Left ventricle myocardium inferior (tissue), 1 donor: ENCODE measurements at regions of chr9 and their contacts with region 1.

Region 1: DNA sequence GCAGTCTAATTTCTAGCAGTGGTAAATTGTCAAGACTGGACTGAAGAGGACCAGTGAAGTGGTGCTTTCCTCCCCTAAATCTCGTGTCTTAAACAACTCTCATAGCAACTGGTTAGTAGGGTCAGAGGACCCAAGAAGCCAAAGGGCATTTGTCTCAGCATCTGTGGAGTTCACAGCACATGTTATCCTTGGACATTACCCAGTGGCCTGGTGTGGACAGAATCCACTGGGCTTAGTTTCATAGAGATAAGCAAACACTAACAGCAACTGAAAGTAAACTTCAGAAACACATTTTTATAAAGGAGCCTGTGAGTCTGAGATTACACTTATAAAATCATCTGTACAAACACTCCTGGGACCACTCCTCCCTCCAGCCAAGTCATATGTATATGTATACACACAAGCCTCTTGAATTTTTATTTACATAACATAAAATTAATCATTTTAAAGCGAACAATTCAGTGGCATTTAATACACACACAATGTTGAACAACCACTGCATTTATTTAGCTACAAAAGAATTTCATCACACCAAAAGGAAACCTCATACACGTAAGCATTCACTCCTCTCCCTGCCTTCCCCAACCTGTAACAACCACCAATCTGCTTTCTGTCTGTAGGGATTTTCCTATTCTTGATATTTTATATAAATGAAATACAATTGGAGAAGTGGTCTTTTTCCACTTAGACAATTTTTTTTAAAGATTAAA is 457.8 kb downstream of the RASEF start:
- DNase-seq: no peak
- H3K4me3 ChIP-seq: no peak overlapping the region
- H3K27ac ChIP-seq: no peak overlapping the region
- H3K4me1 ChIP-seq: peaks cover 30% of the 10 kb centered on the region
- H3K27me3 ChIP-seq: peaks cover 24% of the 10 kb centered on the region
- CTCF ChIP-seq: no peak

Region 2: GRCh38 chr9:82445556-82445955 is 159.5 kb before region 1 on chr9:
- intact Hi-C with region 1: no loop called
- DNase-seq: no peak
- H3K4me3 ChIP-seq: no peak overlapping the region
- H3K27ac ChIP-seq: no peak overlapping the region
- H3K4me1 ChIP-seq: no peaks in the 10 kb centered on the region
- H3K27me3 ChIP-seq: no peaks in the 10 kb centered on the region
- CTCF ChIP-seq: no peak

Region 3: DNA sequence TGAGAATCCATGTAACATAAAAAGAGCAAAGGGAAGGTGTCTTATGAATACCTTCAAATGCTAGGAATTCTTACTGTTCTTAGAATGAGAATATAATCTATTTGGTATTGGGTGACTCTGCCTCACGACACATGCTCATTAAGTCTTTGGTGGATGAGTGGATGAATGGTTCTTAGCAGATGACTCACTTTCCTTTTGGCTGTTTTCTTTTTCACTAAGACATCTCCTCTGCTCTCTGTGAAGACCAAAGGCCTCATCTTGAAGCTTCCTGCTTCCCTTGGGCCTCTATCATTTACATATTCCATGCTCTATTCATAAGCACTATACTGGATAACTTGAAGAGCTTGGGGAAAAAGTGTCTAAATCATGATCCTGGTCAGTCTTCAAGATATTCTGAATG is 148.5 kb before region 1 on chr9:
- intact Hi-C with region 1: no loop called
- DNase-seq: no peak
- H3K4me3 ChIP-seq: no peak overlapping the region
- H3K27ac ChIP-seq: no peak overlapping the region
- H3K4me1 ChIP-seq: no peaks in the 10 kb centered on the region
- H3K27me3 ChIP-seq: no peaks in the 10 kb centered on the region
- CTCF ChIP-seq: no peak

Region 4: DNA sequence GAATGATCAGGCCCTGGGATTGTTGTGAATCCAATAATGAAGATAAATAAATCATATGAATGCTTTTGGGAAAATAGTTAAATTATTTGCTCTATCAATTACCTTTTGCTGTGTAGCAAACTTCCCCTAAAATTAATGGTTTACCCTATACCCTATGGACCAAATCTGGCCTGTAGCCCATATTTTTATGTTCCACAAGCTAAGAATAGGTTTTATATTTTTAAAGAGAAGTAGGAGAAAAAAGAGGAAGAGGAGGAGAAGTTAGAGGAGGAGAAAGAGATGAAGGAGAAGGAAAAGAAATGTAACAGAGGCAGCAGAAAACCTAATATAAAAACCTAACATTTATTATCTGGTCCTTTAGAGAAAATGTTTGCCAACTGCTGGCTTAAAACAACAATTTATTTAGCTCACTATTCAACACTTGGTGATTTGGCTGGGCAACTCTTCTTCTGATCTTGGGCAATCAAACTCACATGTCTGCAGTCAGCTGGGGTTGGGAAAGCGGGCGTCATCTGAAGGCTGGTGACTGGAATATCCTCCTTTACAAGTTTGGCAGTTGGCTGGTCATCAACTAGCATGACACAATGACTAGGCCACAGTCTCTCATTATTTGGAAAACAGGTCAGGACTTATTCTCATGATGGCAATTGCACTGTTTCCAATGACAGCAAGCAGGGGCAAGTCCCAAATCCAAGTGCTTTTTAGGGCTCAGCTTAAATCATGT is 65.1 kb before region 1 on chr9:
- intact Hi-C with region 1: loop called (anchors 5 kb)
- DNase-seq: no peak
- H3K4me3 ChIP-seq: no peak overlapping the region
- H3K27ac ChIP-seq: no peak overlapping the region
- H3K4me1 ChIP-seq: no peaks in the 10 kb centered on the region
- H3K27me3 ChIP-seq: no peaks in the 10 kb centered on the region
- CTCF ChIP-seq: no peak